ENCODE measurements at regions of chr19 and their contacts with region 1.

Region 1: GRCh38 chr19:18571564-18572300 is at the start of gene UBA52:
- DNase-seq: peak; percentile 99 to 100
- ATAC-seq: peak; percentile 96
- H3K4me3 ChIP-seq: peak within 1 kb of the TSS; percentile 80 to 94
- H3K27ac ChIP-seq: peak within 1 kb of the TSS in 1 of 2 donors; percentile 77
- H3K4me1 ChIP-seq: peaks cover 0 to 3% of the 10 kb centered on the region in 2 donors
- H3K27me3 ChIP-seq: no peaks in the 10 kb centered on the region
- total RNA-seq, gene UBA52: 750 to 787 TPM

Region 2: DNA sequence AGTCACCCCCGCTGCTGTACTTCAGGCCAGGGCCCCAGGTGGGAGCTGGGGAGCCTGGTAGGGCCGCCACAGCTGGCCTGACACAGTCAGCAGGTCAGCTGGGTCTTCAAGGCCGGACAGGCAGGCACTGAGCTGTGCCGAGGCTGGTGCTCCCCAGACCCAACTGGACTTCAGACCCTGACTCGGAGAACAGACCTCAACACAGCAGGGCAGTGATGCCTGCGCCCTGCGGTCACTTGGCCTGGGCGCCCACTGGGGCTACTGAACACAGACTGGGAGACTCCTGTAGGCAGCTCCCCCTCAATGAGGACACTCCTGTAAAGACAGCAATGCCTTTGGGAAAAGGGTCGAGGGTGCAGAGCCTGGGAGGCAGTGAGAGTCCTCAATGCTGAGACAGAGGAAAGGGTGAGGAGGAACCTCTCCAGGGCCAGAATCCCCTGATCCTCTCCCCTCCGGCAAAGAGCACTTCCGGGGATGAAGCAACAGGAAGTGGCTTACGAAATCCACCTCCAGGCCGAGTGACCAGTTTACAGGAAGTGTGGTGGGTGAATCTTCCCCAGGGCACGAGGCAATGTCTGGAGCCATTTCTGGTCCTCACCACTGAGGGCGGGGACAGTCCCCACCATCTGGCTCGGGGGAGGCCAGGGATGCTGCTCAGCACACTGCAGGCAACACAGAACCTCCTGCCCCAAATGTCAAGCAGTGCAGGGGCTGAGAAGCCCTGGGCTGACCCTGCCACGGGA is 93.0 kb before region 1 on chr19:
- intact Hi-C with region 1: loop called in 1 of 2 experiments (anchors 10 kb)
- DNase-seq: peak; percentile 88 to 94
- ATAC-seq: peak; percentile 86
- H3K4me3 ChIP-seq: no peak overlapping the region
- H3K27ac ChIP-seq: no peak overlapping the region
- H3K4me1 ChIP-seq: no peaks in the 10 kb centered on the region
- H3K27me3 ChIP-seq: no peaks in the 10 kb centered on the region

Region 3: GRCh38 chr19:18919086-18919899 is 347.6 kb after region 1 on chr19 and contains the starts of genes COPE and DDX49:
- intact Hi-C with region 1: loop called in 1 of 2 experiments (anchors 1 kb)
- DNase-seq: peak; percentile 99
- ATAC-seq: peak; percentile 98
- H3K4me3 ChIP-seq: peak within 1 kb of the TSS; percentile 35 to 91
- H3K27ac ChIP-seq: peak within 1 kb of the TSS; percentile 15 to 53
- H3K4me1 ChIP-seq: no peaks in the 10 kb centered on the region
- H3K27me3 ChIP-seq: no peaks in the 10 kb centered on the region
- total RNA-seq, gene COPE: 121 to 130 TPM
- total RNA-seq, gene DDX49: 25.0 to 32.2 TPM

Measured in aorta (tissue), 5 donors.